H1 (cell line): ENCODE measurements at regions of chr2 and their contacts with region 1.

Region 1: GRCh38 chr2:26144953-26145680 is 27.8 kb upstream of the GAREM2 start:
- DNase-seq: peak; percentile 50 to 81
- H3K4me3 ChIP-seq: no peak overlapping the region
- H3K27ac ChIP-seq: no peak overlapping the region
- H3K4me1 ChIP-seq: no peaks in the 10 kb centered on the region
- H3K27me3 ChIP-seq: no peaks in the 10 kb centered on the region
- CTCF ChIP-seq: peak; percentile 52 to 89 (median 78)
- EP300 ChIP-seq: no peak
- POLR2A ChIP-seq: no peak
- RAD21 ChIP-seq: peak; percentile 93 to 96

Region 2: GRCh38 chr2:25951071-25951547 is 194.0 kb before region 1 on chr2:
- CTCF ChIA-PET with region 1: interaction called, 81 read pairs
- POLR2A ChIA-PET with region 1: interaction called, 3 read pairs
- DNase-seq: peak; percentile 56 to 79
- H3K4me3 ChIP-seq: no peak overlapping the region
- H3K27ac ChIP-seq: no peak overlapping the region
- H3K4me1 ChIP-seq: 0 out of 7 replicates have a peak, but pooled peaks cover 0 to 3% (median under 1%) of the 10 kb centered on the region in 4 experiments
- H3K27me3 ChIP-seq: no peaks in the 10 kb centered on the region
- CTCF ChIP-seq: peak; percentile 89 to 96 (median 94)
- EP300 ChIP-seq: no peak
- POLR2A ChIP-seq: no peak
- RAD21 ChIP-seq: peak; percentile 97 to 98

Region 3: DNA sequence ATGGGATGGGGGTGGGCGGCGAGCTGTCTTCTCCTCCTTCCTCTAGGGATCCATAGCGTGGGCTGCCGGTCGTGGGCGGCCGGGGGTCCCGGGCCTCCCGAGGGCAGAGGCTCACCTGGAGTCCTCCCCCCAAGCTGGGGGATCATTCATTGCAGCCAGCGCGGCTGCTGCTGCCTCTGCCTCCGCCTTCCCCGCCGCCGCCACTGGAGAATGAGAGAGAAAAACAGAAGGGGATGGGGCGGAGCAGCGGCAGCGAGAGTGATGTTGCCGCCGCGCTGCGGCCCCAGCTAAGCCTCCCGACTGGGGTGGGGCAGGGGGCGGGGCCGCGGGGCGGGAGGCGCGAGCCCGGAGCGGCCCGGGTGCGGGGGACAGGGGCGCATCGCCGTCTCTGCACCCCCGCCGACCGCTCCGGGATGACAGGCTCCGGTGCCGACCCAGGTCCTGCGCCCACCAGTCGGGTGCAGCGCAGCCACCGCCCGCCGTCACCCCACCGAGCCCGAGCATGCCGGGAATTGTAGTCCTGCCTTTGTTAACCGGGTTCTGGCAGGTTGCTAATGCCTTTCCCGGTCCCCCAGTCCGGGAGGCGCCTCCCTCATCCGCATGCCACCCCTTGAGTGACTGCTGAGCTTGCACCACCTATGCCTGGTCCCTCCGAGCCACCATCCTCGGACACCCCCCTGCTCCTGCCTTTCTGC is 162.7 kb before region 1 on chr2 and contains the start of gene KIF3C:
- CTCF ChIA-PET with region 1: interaction called, 12 read pairs
- POLR2A ChIA-PET with region 1: interaction called, 3 read pairs
- DNase-seq: peak; percentile 89 to 91
- H3K4me3 ChIP-seq: peak within 1 kb of the TSS; percentile 62 to 81 (median 75)
- H3K27ac ChIP-seq: peak within 1 kb of the TSS; percentile 53
- H3K4me1 ChIP-seq: peaks cover 3 to 32% (median 12%) of the 10 kb centered on the region in 4 experiments
- H3K27me3 ChIP-seq: no peaks in the 10 kb centered on the region
- CTCF ChIP-seq: no peak
- EP300 ChIP-seq: no peak
- POLR2A ChIP-seq: peak; percentile 31 to 57; a peak in 2 of 3 replicates
- RAD21 ChIP-seq: no peak
- total RNA-seq, gene KIF3C: 58.1 and 58.8 TPM in 2 replicates

Region 4: GRCh38 chr2:25991965-25992364 is 153.2 kb before region 1 on chr2:
- CTCF ChIA-PET with region 1: interaction called, 81 read pairs
- POLR2A ChIA-PET with region 1: no interaction called
- DNase-seq: no peak
- H3K4me3 ChIP-seq: no peak overlapping the region
- H3K27ac ChIP-seq: no peak overlapping the region
- H3K4me1 ChIP-seq: no peaks in the 10 kb centered on the region
- H3K27me3 ChIP-seq: no peaks in the 10 kb centered on the region
- CTCF ChIP-seq: no peak
- EP300 ChIP-seq: no peak
- POLR2A ChIP-seq: no peak
- RAD21 ChIP-seq: no peak

Region 5: GRCh38 chr2:26088032-26088643 is 57.0 kb before region 1 on chr2:
- CTCF ChIA-PET with region 1: interaction called, 92 read pairs
- POLR2A ChIA-PET with region 1: interaction called, 6 read pairs
- DNase-seq: no peak
- H3K4me3 ChIP-seq: no peak overlapping the region
- H3K27ac ChIP-seq: no peak overlapping the region
- H3K4me1 ChIP-seq: peaks cover 0 to 4% (median 1%) of the 10 kb centered on the region in 4 experiments; a peak in 3 of 7 replicates
- H3K27me3 ChIP-seq: no peaks in the 10 kb centered on the region
- CTCF ChIP-seq: peak in 2 of 3 experiments; percentile 65 to 80; a peak in 3 of 4 replicates
- EP300 ChIP-seq: no peak
- POLR2A ChIP-seq: no peak
- RAD21 ChIP-seq: peak; percentile 81 to 84

Region 6: DNA sequence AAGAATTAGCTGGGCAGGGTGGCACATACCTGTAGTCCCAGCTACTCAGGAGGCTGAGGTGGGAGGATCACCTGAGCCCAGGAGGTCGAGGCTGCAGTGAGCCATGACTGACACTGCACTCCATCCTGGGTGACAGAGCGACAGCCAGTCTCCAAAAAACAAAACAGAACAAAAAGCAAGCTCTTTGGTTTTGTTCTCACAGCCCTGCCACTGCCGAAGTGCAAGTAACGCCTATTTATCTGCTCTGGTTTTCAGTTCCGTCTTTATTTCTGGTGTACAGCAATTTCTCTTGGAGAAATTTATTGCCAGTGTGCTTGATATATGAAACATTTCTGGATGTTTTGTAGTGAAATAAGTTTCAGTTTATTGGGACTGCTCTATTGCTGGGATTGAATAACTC is 49.4 kb before region 1 on chr2:
- CTCF ChIA-PET with region 1: interaction called, 10 read pairs
- POLR2A ChIA-PET with region 1: interaction called, 3 read pairs
- DNase-seq: no peak
- H3K4me3 ChIP-seq: no peak overlapping the region
- H3K27ac ChIP-seq: no peak overlapping the region
- H3K4me1 ChIP-seq: peaks cover 0 to 7% (median 0%) of the 10 kb centered on the region in 4 experiments; a peak in 1 of 7 replicates
- H3K27me3 ChIP-seq: no peaks in the 10 kb centered on the region
- CTCF ChIP-seq: no peak
- EP300 ChIP-seq: no peak
- POLR2A ChIP-seq: no peak
- RAD21 ChIP-seq: no peak

Region 7: GRCh38 chr2:26168785-26169184 is 23.7 kb after region 1 on chr2:
- CTCF ChIA-PET with region 1: no interaction called
- POLR2A ChIA-PET with region 1: no interaction called
- DNase-seq: no peak
- H3K4me3 ChIP-seq: no peak overlapping the region
- H3K27ac ChIP-seq: no peak overlapping the region
- H3K4me1 ChIP-seq: no peaks in the 10 kb centered on the region
- H3K27me3 ChIP-seq: peaks cover 0 to 2% (median 0%) of the 10 kb centered on the region in 4 experiments; a peak in 2 of 7 replicates
- CTCF ChIP-seq: no peak
- EP300 ChIP-seq: no peak
- POLR2A ChIP-seq: no peak
- RAD21 ChIP-seq: no peak

Region 8: GRCh38 chr2:26509141-26509540 is 364.0 kb after region 1 on chr2:
- CTCF ChIA-PET with region 1: no interaction called
- POLR2A ChIA-PET with region 1: no interaction called
- DNase-seq: no peak
- H3K4me3 ChIP-seq: no peak overlapping the region
- H3K27ac ChIP-seq: no peak overlapping the region
- H3K4me1 ChIP-seq: peaks cover 0 to 2% (median under 1%) of the 10 kb centered on the region in 4 experiments; a peak in 1 of 7 replicates
- H3K27me3 ChIP-seq: peaks cover 0 to 12% (median 7%) of the 10 kb centered on the region in 4 experiments; a peak in 5 of 7 replicates
- CTCF ChIP-seq: no peak
- EP300 ChIP-seq: no peak
- POLR2A ChIP-seq: no peak
- RAD21 ChIP-seq: no peak